ENCODE measurements at regions of chr7 and their contacts with region 1.

Region 1: GRCh38 chr7:6241607-6241973 is 30.8 kb downstream of the CYTH3 start:
- DNase-seq: no peak
- ATAC-seq: no peak
- H3K4me3 ChIP-seq: no peak overlapping the region
- H3K27ac ChIP-seq: no peak overlapping the region
- H3K4me1 ChIP-seq: peaks cover 2% of the 10 kb centered on the region; the same call in 1 of the 2 replicates
- H3K27me3 ChIP-seq: no peaks in the 10 kb centered on the region
- CTCF ChIP-seq: no peak

Region 2: GRCh38 chr7:5997222-5997808 is 244.3 kb before region 1 on chr7:
- CTCF ChIA-PET with region 1: interaction called, 10 read pairs
- POLR2A ChIA-PET with region 1: no interaction called
- in situ Hi-C with region 1: no loop called
- intact Hi-C with region 1: no loop called
- DNase-seq: no peak
- ATAC-seq: peak; percentile 85
- H3K4me3 ChIP-seq: no peak overlapping the region
- H3K27ac ChIP-seq: no peak overlapping the region
- H3K4me1 ChIP-seq: peaks cover 5% of the 10 kb centered on the region
- H3K27me3 ChIP-seq: no peaks in the 10 kb centered on the region
- CTCF ChIP-seq: no peak; the same call in 1 of the 2 replicates

Region 3: GRCh38 chr7:6256109-6256483 is 14.5 kb after region 1 on chr7:
- CTCF ChIA-PET with region 1: interaction called, 10 read pairs
- POLR2A ChIA-PET with region 1: interaction called, 7 read pairs
- in situ Hi-C with region 1: no loop called
- intact Hi-C with region 1: no loop called
- DNase-seq: no peak
- ATAC-seq: peak; percentile 54; the same call in 1 of the 2 replicates
- H3K4me3 ChIP-seq: no peak overlapping the region
- H3K27ac ChIP-seq: no peak overlapping the region
- H3K4me1 ChIP-seq: peaks cover 22% of the 10 kb centered on the region
- H3K27me3 ChIP-seq: no peaks in the 10 kb centered on the region
- CTCF ChIP-seq: no peak; the same call in 1 of the 2 replicates

Region 4: DNA sequence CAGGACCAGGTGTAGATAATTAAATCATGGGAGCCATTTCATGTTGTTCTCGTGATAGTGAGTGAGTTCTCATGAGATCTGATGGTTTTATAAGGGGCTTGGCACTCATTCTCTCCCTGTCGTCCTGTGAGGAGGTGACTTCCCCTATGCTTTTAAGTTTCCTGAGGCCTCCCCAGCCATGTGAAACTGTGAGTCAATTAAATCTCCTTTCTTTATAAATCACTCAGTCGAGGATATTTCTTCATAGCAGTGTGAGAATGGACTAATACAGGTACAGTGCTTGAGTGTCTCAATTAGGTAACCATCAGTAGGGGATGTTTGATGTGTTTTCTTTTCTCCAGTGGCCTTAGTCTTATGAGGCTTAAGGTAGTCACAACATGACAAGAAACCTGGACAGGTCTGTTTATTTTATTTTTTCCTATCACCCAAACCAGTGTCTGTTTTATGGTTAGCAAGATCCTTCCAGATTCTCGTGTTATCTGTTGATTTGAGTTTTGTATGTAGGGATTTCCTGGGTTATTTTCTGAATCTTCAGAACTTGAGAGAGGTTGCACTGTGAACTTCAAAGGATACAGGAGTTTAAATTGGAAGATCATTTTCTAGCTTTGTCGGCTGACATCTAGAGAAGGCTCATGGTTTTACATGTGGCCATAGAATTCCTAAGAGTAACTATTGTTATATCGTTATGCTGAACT is 1431.1 kb after region 1 on chr7:
- CTCF ChIA-PET with region 1: no interaction called
- POLR2A ChIA-PET with region 1: no interaction called
- in situ Hi-C with region 1: no loop called
- intact Hi-C with region 1: no loop called
- DNase-seq: no peak
- ATAC-seq: no peak
- H3K4me3 ChIP-seq: no peak overlapping the region
- H3K27ac ChIP-seq: no peak overlapping the region
- H3K4me1 ChIP-seq: no peaks in the 10 kb centered on the region
- H3K27me3 ChIP-seq: no peaks in the 10 kb centered on the region
- CTCF ChIP-seq: no peak

Measured in Panc1 (cell line).